A549 (cell line): ENCODE measurements at regions of chr4 and their contacts with region 1.

Region 1: GRCh38 chr4:5050520-5051277 is 581 bp upstream of the STK32B start:
- DNase-seq: peak; percentile 83 to 86
- ATAC-seq: peak; percentile 87 to 89
- H3K4me3 ChIP-seq: peak overlapping the region; percentile 63
- H3K27ac ChIP-seq: peak overlapping the region; percentile 78 to 94
- H3K4me1 ChIP-seq: peaks cover 23% of the 10 kb centered on the region
- CTCF ChIP-seq: peak; percentile 65
- EP300 ChIP-seq: no peak
- POLR2A ChIP-seq: no peak
- RAD21 ChIP-seq: peak; percentile 90 to 91

Region 2: DNA sequence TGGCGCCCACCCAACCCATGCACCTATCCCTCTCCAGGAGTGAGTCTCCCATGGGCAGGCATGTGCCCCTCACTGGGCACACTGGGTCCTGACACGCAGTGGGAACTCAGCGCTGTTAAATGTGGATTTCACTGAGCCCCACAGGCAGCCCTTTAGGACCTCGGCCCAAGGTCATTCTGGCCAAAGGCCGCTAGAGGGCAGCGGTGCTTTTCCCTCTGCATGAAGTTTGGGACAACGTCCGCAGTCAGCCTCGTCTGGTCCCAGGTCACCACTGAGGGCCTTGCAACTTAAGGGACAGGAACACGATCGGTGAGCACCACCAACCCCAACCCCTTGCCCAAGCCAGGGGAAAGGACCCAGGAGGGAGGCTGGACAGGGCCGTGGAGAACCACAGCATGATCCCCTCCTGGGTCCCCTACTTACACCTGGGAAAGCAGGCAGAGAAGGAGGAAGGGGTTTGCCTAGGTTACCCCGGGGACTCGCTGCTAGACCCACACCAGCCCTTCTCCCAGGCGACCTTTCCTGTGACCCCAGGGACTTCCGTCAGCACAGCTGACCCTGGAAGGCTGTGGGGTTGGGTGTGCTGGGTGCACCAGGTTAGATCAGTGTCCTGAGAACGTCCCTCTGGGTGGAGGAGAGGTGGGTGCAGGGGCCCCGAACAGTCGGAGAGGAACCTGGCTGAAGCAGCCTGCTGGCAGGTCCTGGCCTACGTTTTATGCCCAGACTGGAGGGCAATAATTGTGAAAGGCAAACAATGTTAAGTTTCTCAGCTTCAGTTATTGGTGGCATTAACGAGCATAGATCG is 55.4 kb before region 1 on chr4:
- CTCF ChIA-PET with region 1: interaction called, 14 read pairs
- POLR2A ChIA-PET with region 1: no interaction called
- DNase-seq: peak; percentile 69 to 73
- ATAC-seq: peak; percentile 86 to 91
- H3K4me3 ChIP-seq: no peak overlapping the region
- H3K27ac ChIP-seq: peak overlapping the region; percentile 35 to 84; a peak in 3 of 6 replicates
- H3K4me1 ChIP-seq: peaks cover 28% of the 10 kb centered on the region
- CTCF ChIP-seq: peak; percentile 78
- EP300 ChIP-seq: no peak
- POLR2A ChIP-seq: no peak
- RAD21 ChIP-seq: peak; percentile 89 to 91

Region 3: GRCh38 chr4:5249727-5250126 is 199.0 kb after region 1 on chr4:
- CTCF ChIA-PET with region 1: no interaction called
- POLR2A ChIA-PET with region 1: no interaction called
- DNase-seq: no peak
- ATAC-seq: no peak
- H3K4me3 ChIP-seq: no peak overlapping the region
- H3K27ac ChIP-seq: no peak overlapping the region
- H3K4me1 ChIP-seq: no peaks in the 10 kb centered on the region
- CTCF ChIP-seq: no peak
- EP300 ChIP-seq: no peak
- POLR2A ChIP-seq: no peak
- RAD21 ChIP-seq: no peak

Region 4: GRCh38 chr4:5460116-5460801 is 409.6 kb after region 1 on chr4:
- CTCF ChIA-PET with region 1: interaction called, 44 read pairs
- POLR2A ChIA-PET with region 1: no interaction called
- DNase-seq: peak; percentile 38 to 43
- ATAC-seq: peak; percentile 67 to 89; a peak in 5 of 6 replicates
- H3K4me3 ChIP-seq: no peak overlapping the region
- H3K27ac ChIP-seq: 0 out of 6 replicates have a peak overlapping the region, but pooled peaks of 1 of the 2 experiments have one; percentile 21
- H3K4me1 ChIP-seq: no peaks in the 10 kb centered on the region
- CTCF ChIP-seq: peak; percentile 59
- EP300 ChIP-seq: no peak
- POLR2A ChIP-seq: no peak
- RAD21 ChIP-seq: peak; percentile 62 to 69

Region 5: GRCh38 chr4:5812506-5813229 is 762.0 kb after region 1 on chr4:
- CTCF ChIA-PET with region 1: interaction called, 16 read pairs
- POLR2A ChIA-PET with region 1: interaction called, 3 read pairs
- DNase-seq: peak; percentile 36 to 67
- ATAC-seq: peak; percentile 87 to 92
- H3K4me3 ChIP-seq: no peak overlapping the region
- H3K27ac ChIP-seq: no peak overlapping the region
- H3K4me1 ChIP-seq: no peaks in the 10 kb centered on the region
- CTCF ChIP-seq: peak; percentile 58
- EP300 ChIP-seq: no peak
- POLR2A ChIP-seq: no peak
- RAD21 ChIP-seq: peak; percentile 57 to 78; a peak in 4 of 5 replicates